SK-N-SH (cell line): ENCODE measurements at regions of chr11 and their contacts with region 1.

Region 1: DNA sequence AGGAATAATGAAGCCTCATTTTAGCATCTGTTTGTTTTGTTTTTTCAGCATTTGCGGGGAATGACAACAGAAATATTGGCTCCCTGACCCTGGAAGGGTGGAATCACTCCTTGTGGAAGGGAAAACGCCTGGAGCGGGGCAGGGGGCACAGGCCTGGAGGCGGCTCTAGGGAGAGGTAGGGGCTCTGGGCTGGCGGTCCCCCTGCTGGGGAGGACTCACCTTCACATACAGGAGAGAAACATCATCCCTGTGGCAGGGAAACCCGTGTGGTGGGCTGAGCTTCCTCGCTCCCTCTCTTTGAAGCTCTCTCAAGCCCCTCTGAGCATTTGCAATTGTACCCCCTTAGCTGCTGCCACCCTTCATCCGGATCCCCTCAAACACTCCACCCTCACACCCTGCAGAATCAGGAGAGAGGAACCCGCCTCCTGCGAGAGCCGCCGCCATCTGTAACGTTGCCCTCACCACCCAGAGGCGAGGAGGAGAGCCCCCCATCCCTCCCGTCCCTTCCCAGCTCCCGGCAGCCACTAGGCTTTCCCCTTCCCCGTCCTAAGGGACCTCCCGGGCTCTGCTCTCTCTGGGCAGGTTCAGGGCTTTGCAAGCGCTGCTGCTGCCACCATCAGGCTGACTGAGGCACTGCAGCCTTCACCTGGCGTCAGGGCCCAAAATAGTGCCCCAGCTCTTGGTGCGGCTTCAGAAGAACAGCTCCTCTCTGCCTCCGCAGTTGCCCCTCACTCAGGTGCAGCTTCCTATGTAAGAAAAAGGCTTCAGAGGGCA is 10.4 kb downstream of the KIRREL3 start:
- DNase-seq: peak; percentile 88
- H3K4me3 ChIP-seq: peak overlapping the region; percentile 21 to 45; a peak in 3 of 4 replicates
- H3K27ac ChIP-seq: peak overlapping the region in 1 of 2 experiments; percentile 99; a peak in 2 of 4 replicates
- H3K4me1 ChIP-seq: peaks cover 2 to 33% of the 10 kb centered on the region in 2 experiments; a peak in 3 of 4 replicates
- H3K27me3 ChIP-seq: no peaks in the 10 kb centered on the region
- CTCF ChIP-seq: peak; percentile 97
- EP300 ChIP-seq: no peak
- RAD21 ChIP-seq: peak; percentile 93

Region 2: GRCh38 chr11:126310228-126310991 is 679.7 kb before region 1 on chr11:
- CTCF ChIA-PET with region 1: interaction called, 35 read pairs
- POLR2A ChIA-PET with region 1: no interaction called
- DNase-seq: peak; percentile 81
- H3K4me3 ChIP-seq: no peak overlapping the region; a peak in 1 of 4 replicates
- H3K27ac ChIP-seq: no peak overlapping the region
- H3K4me1 ChIP-seq: peaks cover 4% of the 10 kb centered on the region in 2 experiments; a peak in 2 of 4 replicates
- H3K27me3 ChIP-seq: no peaks in the 10 kb centered on the region
- CTCF ChIP-seq: peak; percentile 93
- EP300 ChIP-seq: no peak
- RAD21 ChIP-seq: peak; percentile 98

Region 3: GRCh38 chr11:126489836-126490660 is 500.1 kb before region 1 on chr11:
- CTCF ChIA-PET with region 1: interaction called, 20 read pairs
- POLR2A ChIA-PET with region 1: no interaction called
- DNase-seq: no peak
- H3K4me3 ChIP-seq: no peak overlapping the region
- H3K27ac ChIP-seq: no peak overlapping the region
- H3K4me1 ChIP-seq: peaks cover 0 to 24% of the 10 kb centered on the region in 2 experiments; a peak in 2 of 4 replicates
- H3K27me3 ChIP-seq: no peaks in the 10 kb centered on the region
- CTCF ChIP-seq: no peak
- EP300 ChIP-seq: no peak
- RAD21 ChIP-seq: no peak

Region 4: DNA sequence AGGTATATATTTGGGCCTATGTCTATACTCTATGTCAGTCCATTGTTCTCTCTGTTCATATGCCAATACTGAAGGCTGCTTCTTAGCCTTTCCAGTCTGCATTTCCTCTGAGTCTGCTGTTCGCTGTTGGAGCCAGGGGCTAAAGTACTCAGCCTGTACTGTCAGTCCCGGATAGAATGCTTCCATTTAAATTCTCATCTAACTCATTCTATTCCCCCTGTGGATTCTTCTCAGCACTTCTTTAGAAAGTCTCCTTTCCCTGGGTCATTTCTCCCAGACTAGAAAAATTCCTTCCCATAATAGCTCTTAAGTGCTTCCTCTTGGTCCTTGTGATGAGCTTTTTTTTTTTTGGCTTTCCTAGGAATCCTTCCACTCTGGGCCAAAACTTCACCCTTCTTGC is 282.6 kb before region 1 on chr11:
- CTCF ChIA-PET with region 1: interaction called, 233 read pairs
- POLR2A ChIA-PET with region 1: no interaction called
- DNase-seq: no peak
- H3K4me3 ChIP-seq: no peak overlapping the region
- H3K27ac ChIP-seq: no peak overlapping the region
- H3K4me1 ChIP-seq: peaks cover 0 to 12% of the 10 kb centered on the region in 2 experiments; a peak in 1 of 4 replicates
- H3K27me3 ChIP-seq: no peaks in the 10 kb centered on the region
- CTCF ChIP-seq: no peak
- EP300 ChIP-seq: no peak
- RAD21 ChIP-seq: no peak

Region 5: DNA sequence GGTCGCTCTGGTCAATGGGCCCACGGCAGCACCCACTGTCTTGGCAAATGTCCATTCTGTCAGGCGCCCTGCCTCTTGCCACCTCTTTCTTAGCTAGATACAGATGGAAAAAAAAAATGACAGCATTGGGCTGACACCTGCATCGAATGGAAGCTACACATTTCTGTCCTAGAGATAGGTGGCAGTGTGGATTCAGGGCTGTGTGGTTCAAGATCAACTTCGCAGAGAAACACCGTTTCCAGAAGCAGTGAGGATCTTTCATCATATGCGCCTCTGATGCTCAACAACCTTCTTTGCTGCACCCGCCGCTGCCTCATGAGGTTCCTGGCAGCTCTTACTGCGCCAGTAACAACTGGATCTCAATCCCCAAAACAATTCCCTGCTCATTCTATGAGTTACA is 225.9 kb before region 1 on chr11:
- CTCF ChIA-PET with region 1: interaction called, 14 read pairs
- POLR2A ChIA-PET with region 1: no interaction called
- DNase-seq: no peak
- H3K4me3 ChIP-seq: no peak overlapping the region
- H3K27ac ChIP-seq: no peak overlapping the region
- H3K4me1 ChIP-seq: no peaks in the 10 kb centered on the region
- H3K27me3 ChIP-seq: no peaks in the 10 kb centered on the region
- CTCF ChIP-seq: no peak; the same call in 1 of the 2 replicates
- EP300 ChIP-seq: no peak
- RAD21 ChIP-seq: peak; percentile 39

Region 6: DNA sequence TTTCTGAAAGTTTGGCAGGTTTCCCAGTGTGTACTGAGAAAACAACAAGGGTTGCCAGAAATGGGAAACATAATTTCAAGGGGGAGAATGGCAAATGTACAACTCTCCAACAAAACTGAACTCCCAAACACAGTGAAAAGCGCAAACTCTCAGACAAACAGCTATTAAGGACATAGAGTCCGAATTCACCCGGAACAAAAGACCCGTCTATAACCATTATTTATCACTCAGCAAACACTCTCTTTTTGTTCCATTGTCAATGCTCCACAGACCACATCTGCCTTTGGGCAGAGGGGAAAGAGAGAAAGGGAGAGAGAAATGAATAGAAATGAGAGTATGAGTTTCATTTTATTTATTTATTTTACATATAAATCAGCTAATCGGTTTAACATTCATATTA is 11.2 kb before region 1 on chr11:
- CTCF ChIA-PET with region 1: interaction called, 20 read pairs
- POLR2A ChIA-PET with region 1: no interaction called
- DNase-seq: no peak
- H3K4me3 ChIP-seq: no peak overlapping the region
- H3K27ac ChIP-seq: no peak overlapping the region
- H3K4me1 ChIP-seq: no peaks in the 10 kb centered on the region
- H3K27me3 ChIP-seq: no peaks in the 10 kb centered on the region
- CTCF ChIP-seq: no peak
- EP300 ChIP-seq: no peak
- RAD21 ChIP-seq: no peak